Activated T-helper 1 cell treated with anti-CD3 and anti-CD28 coated beads, Interleukin-12 subunit alpha, Interleukin-12 subunit beta, Interleukin-2, Interleukin-4 antibody, amounts not matched to agents 30 ng/mL and 10 ng/mL and 1 ng/mL, durations not matched to agents 14 hours and 24 hours and 36 hours (primary cell): ENCODE measurements at regions of chr17 and their contacts with region 1.

Region 1: GRCh38 chr17:47941236-47941994 is at the start of gene PNPO:
- DNase-seq: peak; percentile 95
- H3K4me3 Mint-ChIP-seq: peak within 1 kb of the TSS; percentile 92
- H3K27ac Mint-ChIP-seq: peak within 1 kb of the TSS; percentile 96
- H3K4me1 Mint-ChIP-seq: peaks cover 68% of the 10 kb centered on the region
- H3K27me3 Mint-ChIP-seq: peaks cover 1% of the 10 kb centered on the region
- total RNA-seq, gene PNPO: 58.8 and 60.7 TPM in 2 replicates

Region 2: DNA sequence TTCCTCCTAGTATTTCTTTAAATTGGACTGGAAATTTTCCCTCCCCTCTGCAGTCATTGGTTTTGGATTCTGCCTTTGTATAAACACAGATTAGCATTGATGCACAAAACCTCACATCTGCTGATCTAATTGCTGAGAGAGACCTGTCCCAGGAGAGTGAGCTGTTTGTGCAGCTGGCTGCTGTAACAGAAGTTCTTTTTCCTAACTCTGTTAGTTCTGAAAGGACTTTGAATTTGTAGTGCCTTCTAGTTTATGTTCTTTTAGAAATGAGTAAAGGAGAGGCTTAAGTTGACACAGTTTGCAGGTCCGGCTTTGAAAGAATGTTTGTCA is 336.9 kb before region 1 on chr17:
- intact Hi-C with region 1: no loop called
- DNase-seq: no peak
- H3K4me3 Mint-ChIP-seq: no peak overlapping the region
- H3K27ac Mint-ChIP-seq: no peak overlapping the region
- H3K4me1 Mint-ChIP-seq: no peaks in the 10 kb centered on the region
- H3K27me3 Mint-ChIP-seq: no peaks in the 10 kb centered on the region

Region 3: GRCh38 chr17:47720754-47721533 is 220.5 kb before region 1 on chr17:
- intact Hi-C with region 1: loop called (anchors 5 kb)
- DNase-seq: peak; percentile 85
- H3K4me3 Mint-ChIP-seq: peak overlapping the region; percentile 78
- H3K27ac Mint-ChIP-seq: peak overlapping the region; percentile 95
- H3K4me1 Mint-ChIP-seq: peaks cover 83% of the 10 kb centered on the region
- H3K27me3 Mint-ChIP-seq: no peaks in the 10 kb centered on the region

Region 4: GRCh38 chr17:47840740-47841603 is 100.4 kb before region 1 on chr17 and contains the start of gene SCRN2:
- intact Hi-C with region 1: loop called (anchors 2 kb)
- DNase-seq: peak; percentile 86
- H3K4me3 Mint-ChIP-seq: peak within 1 kb of the TSS; percentile 96
- H3K27ac Mint-ChIP-seq: peak within 1 kb of the TSS; percentile 96
- H3K4me1 Mint-ChIP-seq: peaks cover 28% of the 10 kb centered on the region
- H3K27me3 Mint-ChIP-seq: peaks cover 16% of the 10 kb centered on the region
- total RNA-seq, gene SCRN2: 24.5 and 26.3 TPM in 2 replicates

Region 5: DNA sequence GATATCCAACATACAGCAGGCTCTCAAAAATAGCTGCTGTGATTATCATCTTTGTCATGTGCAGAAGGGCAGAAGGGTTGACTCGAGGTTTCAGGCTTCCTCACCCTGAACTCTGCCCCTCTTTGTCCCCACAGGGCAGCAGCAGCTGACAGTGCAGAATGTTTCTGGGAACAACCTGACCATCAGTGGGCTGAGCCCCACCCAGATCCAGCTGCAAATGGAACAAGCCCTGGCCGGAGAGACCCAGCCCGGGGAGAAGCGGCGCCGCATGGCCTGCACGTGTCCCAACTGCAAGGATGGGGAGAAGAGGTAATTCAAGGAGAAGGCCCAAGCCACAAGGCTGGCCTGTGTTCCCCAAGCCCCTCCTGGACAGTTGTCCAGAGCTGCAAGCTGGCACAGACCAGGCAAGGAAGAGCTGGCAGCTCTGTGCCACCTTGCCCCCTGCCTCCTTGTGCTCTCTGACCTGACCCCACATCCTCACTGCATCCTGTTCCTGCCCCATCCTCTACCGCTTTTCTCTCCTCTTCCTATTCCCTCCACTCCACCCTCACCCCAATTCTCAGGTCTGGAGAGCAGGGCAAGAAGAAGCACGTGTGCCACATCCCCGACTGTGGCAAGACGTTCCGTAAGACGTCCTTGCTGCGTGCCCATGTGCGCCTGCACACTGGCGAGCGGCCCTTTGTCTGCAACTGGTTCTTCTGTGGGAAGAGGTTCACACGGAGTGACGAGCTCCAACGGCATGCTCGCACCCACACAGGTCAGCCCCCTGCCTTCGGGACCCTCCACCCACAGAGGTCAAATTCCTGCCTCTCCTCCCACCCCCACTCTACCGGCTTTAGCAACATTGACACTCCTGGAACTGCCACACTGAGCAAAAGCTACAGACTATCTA is 16.4 kb before region 1 on chr17:
- intact Hi-C with region 1: no loop called
- DNase-seq: no peak
- H3K4me3 Mint-ChIP-seq: no peak overlapping the region
- H3K27ac Mint-ChIP-seq: no peak overlapping the region
- H3K4me1 Mint-ChIP-seq: no peaks in the 10 kb centered on the region
- H3K27me3 Mint-ChIP-seq: no peaks in the 10 kb centered on the region

Region 6: GRCh38 chr17:47970704-47971463 is 29.5 kb after region 1 on chr17 and contains the start of gene CDK5RAP3:
- intact Hi-C with region 1: loop called (anchors 1 kb)
- DNase-seq: peak; percentile 100
- H3K4me3 Mint-ChIP-seq: peak within 1 kb of the TSS; percentile 89
- H3K27ac Mint-ChIP-seq: peak within 1 kb of the TSS; percentile 93
- H3K4me1 Mint-ChIP-seq: peaks cover 31% of the 10 kb centered on the region
- H3K27me3 Mint-ChIP-seq: peaks cover 2% of the 10 kb centered on the region
- total RNA-seq, gene CDK5RAP3: 190 and 200 TPM in 2 replicates

Region 7: GRCh38 chr17:48107168-48108132 is 166.0 kb after region 1 on chr17 and contains the start of gene SNX11:
- intact Hi-C with region 1: loop called (anchors 2 kb)
- DNase-seq: peak; percentile 91
- H3K4me3 Mint-ChIP-seq: peak within 1 kb of the TSS; percentile 100
- H3K27ac Mint-ChIP-seq: peak within 1 kb of the TSS; percentile 99
- H3K4me1 Mint-ChIP-seq: peaks cover 63% of the 10 kb centered on the region
- H3K27me3 Mint-ChIP-seq: no peaks in the 10 kb centered on the region
- total RNA-seq, gene SNX11: 31.1 and 37.1 TPM in 2 replicates